Right ventricle myocardium superior (tissue), 1 donor: ENCODE measurements at regions of chr9 and their contacts with region 1.

Region 1: GRCh38 chr9:110217656-110218099 is 9.7 kb upstream of the C9orf152 start:
- DNase-seq: no peak
- ATAC-seq: no peak

Region 2: GRCh38 chr9:109903515-109904138 is 314.1 kb before region 1 on chr9:
- intact Hi-C with region 1: loop called (anchors 10 kb)
- DNase-seq: peak; percentile 53
- ATAC-seq: peak; percentile 72